Activated CD4-positive, alpha-beta T cell treated with anti-CD3 and anti-CD28 coated beads for 36 hours (primary cell): ENCODE measurements at regions of chr11 and their contacts with region 1.

Region 1: GRCh38 chr11:4072668-4073285 is 21.8 kb upstream of the RRM1 start:
- DNase-seq: peak; percentile 62
- ATAC-seq: peak; percentile 75
- H3K4me3 Mint-ChIP-seq: no peak overlapping the region
- H3K27ac Mint-ChIP-seq: no peak overlapping the region
- H3K4me1 Mint-ChIP-seq: peaks cover 48% of the 10 kb centered on the region
- H3K27me3 Mint-ChIP-seq: no peaks in the 10 kb centered on the region

Region 2: GRCh38 chr11:3807909-3808860 is 264.6 kb before region 1 on chr11 and contains the start of gene PGAP2:
- CTCF ChIA-PET with region 1: interaction called, 47 read pairs
- POLR2A ChIA-PET with region 1: no interaction called
- intact Hi-C with region 1: no loop called
- DNase-seq: peak; percentile 77
- ATAC-seq: peak; percentile 78
- H3K4me3 Mint-ChIP-seq: peak within 1 kb of the TSS; percentile 93
- H3K27ac Mint-ChIP-seq: peak within 1 kb of the TSS; percentile 94
- H3K4me1 Mint-ChIP-seq: peaks cover 24% of the 10 kb centered on the region
- H3K27me3 Mint-ChIP-seq: no peaks in the 10 kb centered on the region
- total RNA-seq, gene PGAP2: 33.6 to 39.2 TPM

Region 3: GRCh38 chr11:3834664-3835461 is 237.9 kb before region 1 on chr11:
- CTCF ChIA-PET with region 1: interaction called, 46 read pairs
- POLR2A ChIA-PET with region 1: no interaction called
- intact Hi-C with region 1: no loop called
- DNase-seq: peak; percentile 32
- ATAC-seq: no peak
- H3K4me3 Mint-ChIP-seq: peak overlapping the region; percentile 93
- H3K27ac Mint-ChIP-seq: peak overlapping the region; percentile 92
- H3K4me1 Mint-ChIP-seq: peaks cover 87% of the 10 kb centered on the region
- H3K27me3 Mint-ChIP-seq: no peaks in the 10 kb centered on the region

Region 4: DNA sequence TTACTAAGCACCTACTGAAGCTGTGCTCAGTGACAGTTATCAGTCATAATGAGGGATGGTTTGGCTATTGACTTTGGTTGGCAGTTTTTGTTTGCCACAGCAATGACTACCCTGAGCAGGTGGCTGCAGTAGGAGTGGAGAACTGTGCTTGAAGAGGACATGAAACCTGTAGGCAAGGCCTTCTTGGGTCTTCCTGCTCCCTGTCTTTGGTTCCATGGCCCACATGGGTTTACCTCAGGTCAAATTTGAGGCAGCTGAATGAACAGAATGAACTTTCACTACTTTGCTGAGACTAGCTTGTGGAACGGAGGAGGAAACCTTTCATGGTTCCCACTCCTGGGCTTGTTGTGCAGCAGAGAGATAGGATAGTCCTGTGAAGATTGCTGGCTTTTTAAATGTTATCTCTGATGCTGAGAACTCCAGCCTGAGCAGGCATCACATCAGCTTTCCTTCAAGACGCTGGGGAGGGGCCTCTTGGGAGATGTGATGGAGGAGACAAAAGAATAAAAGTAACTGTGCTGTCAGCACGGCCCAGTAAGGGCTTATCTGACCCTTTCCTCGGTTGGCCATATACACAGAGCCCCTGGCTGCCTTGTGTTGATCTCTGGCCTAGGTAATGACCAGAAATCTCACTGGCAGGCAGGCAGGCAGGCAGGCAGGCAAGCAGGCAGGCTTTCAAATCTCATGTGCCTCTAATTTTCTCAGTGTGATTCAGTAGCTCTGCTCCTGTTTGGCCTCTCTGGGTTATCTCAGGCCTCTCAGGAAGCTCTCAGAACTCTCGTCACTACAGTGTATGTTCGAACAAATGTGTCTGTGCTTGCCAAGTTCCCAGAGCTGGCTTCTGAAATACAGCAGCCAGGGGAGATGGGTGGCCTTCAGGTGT is 205.3 kb before region 1 on chr11:
- CTCF ChIA-PET with region 1: interaction called, 15 read pairs
- POLR2A ChIA-PET with region 1: no interaction called
- intact Hi-C with region 1: no loop called
- DNase-seq: peak; percentile 61
- ATAC-seq: peak; percentile 70
- H3K4me3 Mint-ChIP-seq: peak overlapping the region; percentile 25
- H3K27ac Mint-ChIP-seq: peak overlapping the region; percentile 92
- H3K4me1 Mint-ChIP-seq: peaks cover 90% of the 10 kb centered on the region
- H3K27me3 Mint-ChIP-seq: no peaks in the 10 kb centered on the region

Region 5: GRCh38 chr11:3984896-3985295 is 87.9 kb before region 1 on chr11:
- CTCF ChIA-PET with region 1: interaction called, 10 read pairs
- POLR2A ChIA-PET with region 1: no interaction called
- intact Hi-C with region 1: no loop called
- DNase-seq: peak; percentile 76
- ATAC-seq: peak; percentile 85
- H3K4me3 Mint-ChIP-seq: no peak overlapping the region
- H3K27ac Mint-ChIP-seq: peak overlapping the region; percentile 49
- H3K4me1 Mint-ChIP-seq: peaks cover 75% of the 10 kb centered on the region
- H3K27me3 Mint-ChIP-seq: no peaks in the 10 kb centered on the region

Region 6: DNA sequence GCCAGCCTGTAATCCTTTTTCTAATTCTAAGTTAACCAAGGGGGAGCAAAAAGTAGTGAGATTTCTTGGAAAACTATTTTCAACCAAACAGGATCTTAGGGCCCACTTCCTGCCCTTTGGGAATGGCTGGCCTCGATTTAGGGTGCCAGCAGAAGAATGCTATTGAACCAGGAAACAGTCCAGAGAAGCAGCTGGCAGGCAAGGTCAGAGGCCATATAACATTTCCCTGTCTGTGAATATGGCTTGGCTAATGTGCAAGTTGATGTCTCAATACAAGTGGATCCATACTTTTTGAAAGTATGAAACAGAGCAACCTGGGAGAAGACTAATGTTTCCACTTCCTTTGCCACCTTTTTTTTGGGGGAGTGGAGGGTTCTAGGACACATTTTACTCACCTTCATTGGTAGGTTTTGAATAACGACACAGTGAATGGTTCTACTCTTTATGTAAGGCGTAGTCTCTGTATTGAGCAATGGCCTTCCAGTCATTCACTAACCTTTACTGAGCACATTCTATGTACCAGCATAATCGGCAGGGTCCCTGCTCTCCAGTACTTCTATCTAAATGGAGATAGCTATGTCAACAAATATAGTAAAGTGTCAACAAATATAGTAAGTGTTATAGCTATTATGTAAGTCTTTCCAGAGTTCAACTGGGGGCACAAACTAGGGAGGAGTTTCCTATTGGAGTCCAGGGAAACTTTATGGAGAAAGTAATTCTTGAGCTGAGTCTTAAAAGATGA is 12.4 kb before region 1 on chr11:
- CTCF ChIA-PET with region 1: interaction called, 30 read pairs
- POLR2A ChIA-PET with region 1: interaction called, 3 read pairs
- intact Hi-C with region 1: no loop called
- DNase-seq: no peak
- ATAC-seq: no peak
- H3K4me3 Mint-ChIP-seq: no peak overlapping the region
- H3K27ac Mint-ChIP-seq: no peak overlapping the region
- H3K4me1 Mint-ChIP-seq: peaks cover 37% of the 10 kb centered on the region
- H3K27me3 Mint-ChIP-seq: no peaks in the 10 kb centered on the region

Region 7: GRCh38 chr11:4156571-4156970 is 83.8 kb after region 1 on chr11:
- CTCF ChIA-PET with region 1: no interaction called
- POLR2A ChIA-PET with region 1: no interaction called
- intact Hi-C with region 1: no loop called
- DNase-seq: no peak
- ATAC-seq: no peak
- H3K4me3 Mint-ChIP-seq: no peak overlapping the region
- H3K27ac Mint-ChIP-seq: no peak overlapping the region
- H3K4me1 Mint-ChIP-seq: no peaks in the 10 kb centered on the region
- H3K27me3 Mint-ChIP-seq: no peaks in the 10 kb centered on the region

Region 8: DNA sequence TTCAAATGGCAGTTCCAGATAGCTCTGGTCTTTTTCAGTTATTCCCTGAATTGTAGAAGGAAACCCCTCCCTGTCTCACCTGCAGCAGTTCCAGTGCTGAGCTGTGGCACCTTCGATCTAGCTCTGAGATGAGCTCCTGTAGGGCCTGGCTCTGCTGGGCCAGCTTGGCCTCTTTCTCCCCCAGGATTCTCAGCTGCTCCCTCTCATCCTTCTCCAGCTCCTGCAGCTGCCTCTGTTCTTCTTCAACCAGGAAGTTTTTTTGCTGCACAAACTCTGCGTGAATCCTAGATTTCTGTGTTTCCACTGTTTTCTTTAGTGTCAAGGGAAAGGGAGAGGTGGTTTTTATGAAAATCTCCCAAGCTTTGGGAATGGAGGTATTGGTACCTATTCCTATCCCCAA is 315.4 kb after region 1 on chr11:
- CTCF ChIA-PET with region 1: no interaction called
- POLR2A ChIA-PET with region 1: no interaction called
- intact Hi-C with region 1: no loop called
- DNase-seq: no peak
- ATAC-seq: no peak
- H3K4me3 Mint-ChIP-seq: no peak overlapping the region
- H3K27ac Mint-ChIP-seq: no peak overlapping the region
- H3K4me1 Mint-ChIP-seq: peaks cover 25% of the 10 kb centered on the region
- H3K27me3 Mint-ChIP-seq: no peaks in the 10 kb centered on the region